AG04449 (cell line): ENCODE measurements at regions of chrX and their contacts with region 1.

Region 1: DNA sequence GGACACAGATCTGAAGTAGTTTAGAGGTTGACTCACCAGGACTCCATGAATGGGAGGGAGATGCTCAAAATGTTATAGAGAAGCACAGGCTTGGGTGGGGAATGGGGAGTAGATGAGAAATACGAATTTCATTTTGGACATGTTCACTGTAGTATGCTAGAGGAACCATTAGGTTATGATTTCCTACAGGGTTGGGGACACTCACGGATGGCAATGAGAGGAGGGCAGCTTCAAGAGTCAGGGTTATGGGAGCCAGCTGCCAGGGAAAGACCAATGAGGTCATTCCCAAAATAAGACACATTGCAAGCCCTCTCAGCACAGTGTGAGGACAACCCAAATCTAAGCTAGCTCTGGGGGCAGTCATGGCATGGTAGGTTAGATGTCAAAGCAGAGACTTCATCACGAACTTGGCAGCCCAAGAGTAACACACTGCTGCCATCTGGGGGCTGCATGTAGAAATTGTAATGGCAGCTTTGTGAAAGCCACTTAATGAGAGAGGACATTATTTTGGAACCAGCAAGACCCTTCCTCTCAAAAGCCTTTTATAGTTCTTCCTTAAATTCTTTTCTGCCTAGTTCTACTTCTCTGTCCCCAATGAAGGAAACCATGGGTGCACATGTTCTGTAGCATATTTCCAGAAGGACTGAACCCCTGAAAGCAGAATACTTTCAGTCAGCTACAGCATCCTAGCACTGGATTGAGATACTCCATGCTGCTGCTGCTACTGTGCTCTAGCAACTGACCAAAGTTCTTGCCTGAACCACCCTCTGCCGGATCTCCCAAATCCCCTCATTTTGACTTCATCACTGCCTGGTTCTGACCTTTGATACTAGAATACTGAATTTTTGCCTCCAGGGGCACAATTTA is 16.2 kb upstream of the ZCCHC12 start:
- DNase-seq: no peak
- H3K4me3 ChIP-seq: no peak overlapping the region
- CTCF ChIP-seq: peak; percentile 44

Region 2: DNA sequence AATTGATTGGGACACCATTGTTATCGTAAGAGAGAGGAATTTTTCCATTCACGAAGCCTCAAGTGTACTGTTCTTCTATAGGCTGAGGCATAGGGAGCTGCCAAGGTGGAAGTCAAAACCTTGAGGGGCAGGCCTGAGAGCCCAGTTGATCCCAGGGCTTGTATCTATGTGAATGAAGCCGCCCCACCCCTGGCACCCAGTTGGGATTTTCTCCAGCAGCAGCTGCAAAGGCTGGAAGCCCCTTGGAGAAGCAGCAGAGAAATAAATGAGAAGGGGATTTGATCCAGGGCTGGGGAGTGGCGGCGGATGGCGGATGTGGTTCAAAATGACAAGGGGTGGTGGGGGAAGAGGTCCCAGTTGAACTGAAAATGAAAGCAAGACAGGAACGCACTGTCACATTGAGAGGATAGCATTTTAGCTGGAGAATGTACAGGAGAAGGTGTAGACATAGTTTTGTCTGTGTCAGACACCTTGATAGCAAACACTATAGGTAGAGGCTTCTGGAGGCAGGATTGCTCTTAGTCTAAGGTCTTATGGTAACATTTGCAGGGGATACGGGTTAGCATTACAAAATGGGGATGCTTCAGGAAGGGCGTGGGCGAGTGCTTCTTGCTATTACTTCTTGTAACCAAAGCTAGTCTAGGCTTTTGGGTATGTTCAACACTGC is 279.2 kb before region 1 on chrX:
- CTCF ChIA-PET with region 1: no interaction called
- POLR2A ChIA-PET with region 1: no interaction called
- DNase-seq: no peak
- H3K4me3 ChIP-seq: no peak overlapping the region
- CTCF ChIP-seq: no peak

Region 3: DNA sequence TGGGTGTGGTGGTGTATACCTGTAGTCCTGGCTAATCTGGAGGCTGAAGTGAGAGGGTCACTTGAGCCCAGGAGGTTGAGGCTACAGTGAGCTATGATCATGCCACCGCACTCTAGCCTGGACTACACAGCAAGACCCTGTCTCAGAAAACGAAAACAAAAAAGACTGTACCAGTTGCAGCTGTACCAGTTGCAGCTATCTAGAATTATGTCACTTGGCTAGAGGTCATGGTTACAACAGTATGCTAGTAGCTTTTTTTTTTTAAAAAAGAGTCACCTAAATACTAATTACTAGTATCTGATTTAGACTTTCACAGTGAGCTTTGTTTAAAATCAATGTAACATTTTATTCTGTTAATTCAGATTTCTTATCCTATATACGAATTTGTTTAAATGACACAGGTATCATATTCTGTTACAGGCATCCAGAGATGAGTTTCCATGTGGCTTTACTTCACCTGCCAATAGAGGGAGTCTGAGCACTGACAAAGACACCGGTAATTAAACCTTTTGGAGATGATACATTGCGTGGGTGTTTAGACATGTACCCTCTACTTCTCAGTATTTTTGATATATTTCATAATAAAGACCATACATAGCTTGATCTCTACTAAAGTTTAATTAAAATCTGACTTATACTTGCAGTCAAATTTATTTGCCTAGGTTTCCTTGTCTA is 180.2 kb before region 1 on chrX:
- CTCF ChIA-PET with region 1: interaction called, 19 read pairs
- POLR2A ChIA-PET with region 1: no interaction called
- DNase-seq: no peak
- H3K4me3 ChIP-seq: no peak overlapping the region
- CTCF ChIP-seq: peak; percentile 12

Region 4: DNA sequence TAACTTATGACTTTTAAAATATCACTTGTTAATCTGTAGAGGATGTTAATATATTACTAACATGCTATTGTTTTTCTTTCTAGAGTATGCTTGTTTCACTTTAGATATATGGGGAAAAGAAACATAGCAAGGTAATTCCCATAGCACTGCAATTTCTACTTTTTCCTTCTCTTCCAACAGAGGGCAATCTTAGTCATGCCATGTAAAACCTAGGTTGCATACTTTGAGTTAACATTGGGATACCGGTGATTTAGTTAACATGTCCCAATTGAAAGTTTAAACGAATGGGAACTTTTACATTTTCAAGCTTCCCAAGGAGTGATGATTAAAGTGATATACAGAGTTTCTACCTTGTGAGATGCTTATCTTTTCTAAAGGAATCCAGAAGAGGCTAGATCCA is 169.4 kb before region 1 on chrX:
- CTCF ChIA-PET with region 1: interaction called, 62 read pairs
- POLR2A ChIA-PET with region 1: no interaction called
- DNase-seq: no peak
- H3K4me3 ChIP-seq: no peak overlapping the region
- CTCF ChIP-seq: no peak

Region 5: GRCh38 chrX:118644378-118644777 is 163.0 kb before region 1 on chrX:
- CTCF ChIA-PET with region 1: interaction called, 62 read pairs
- POLR2A ChIA-PET with region 1: no interaction called
- DNase-seq: no peak
- H3K4me3 ChIP-seq: no peak overlapping the region
- CTCF ChIP-seq: peak; percentile 32